CD4-positive, alpha-beta T cell (primary cell): ENCODE measurements at regions of chr16 and their contacts with region 1.

Region 1: DNA sequence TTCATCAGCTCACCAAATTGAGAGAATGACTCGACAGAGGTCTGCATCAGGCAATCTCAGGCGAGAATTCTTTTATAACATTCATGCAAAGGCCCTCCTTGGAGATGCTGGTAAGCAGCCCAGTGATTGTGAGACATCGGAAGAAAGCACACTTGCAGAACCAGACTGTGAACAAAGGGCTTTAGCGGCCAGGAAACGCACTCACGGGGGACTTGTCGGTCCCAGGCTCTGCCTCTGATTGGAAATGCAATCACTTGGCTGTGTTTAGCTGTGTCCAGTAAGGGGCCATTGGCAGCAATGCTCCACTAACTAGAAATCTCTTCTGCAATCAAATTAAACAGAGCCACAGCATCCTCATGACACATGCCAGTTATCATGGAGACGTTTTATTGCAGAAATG is 226.7 kb upstream of the CDH13 start:
- DNase-seq: no peak
- ATAC-seq: no peak
- H3K4me3 ChIP-seq: no peak overlapping the region
- H3K4me3 Mint-ChIP-seq: no peak overlapping the region
- H3K27ac ChIP-seq: no peak overlapping the region
- H3K27ac Mint-ChIP-seq: no peak overlapping the region
- H3K4me1 ChIP-seq: no peaks in the 10 kb centered on the region
- H3K4me1 Mint-ChIP-seq: no peaks in the 10 kb centered on the region
- H3K27me3 ChIP-seq: peaks cover 0 to 3% of the 10 kb centered on the region in 2 experiments
- H3K27me3 Mint-ChIP-seq: peaks cover 23% of the 10 kb centered on the region
- CTCF ChIP-seq: no peak

Region 2: DNA sequence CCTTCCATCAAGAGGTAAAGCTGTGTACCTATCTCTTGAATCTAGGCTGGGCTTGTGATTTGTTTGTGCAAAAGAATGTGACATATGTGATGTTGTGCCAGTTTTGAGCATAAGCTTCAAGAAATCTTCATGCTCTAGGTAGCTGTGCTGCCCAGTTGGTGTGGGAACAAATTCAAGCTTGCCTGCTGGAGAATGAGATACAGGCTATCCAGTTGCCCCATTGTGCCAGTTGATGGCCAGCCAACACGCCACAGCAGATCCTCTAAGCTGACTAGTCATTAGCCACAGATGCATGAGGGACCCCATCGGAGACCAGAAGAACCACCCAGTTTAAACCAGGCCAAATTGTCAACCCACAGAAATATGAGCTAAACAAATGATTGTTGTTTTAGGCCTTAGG is 49.5 kb before region 1 on chr16:
- CTCF ChIA-PET with region 1: no interaction called
- POLR2A ChIA-PET with region 1: no interaction called
- intact Hi-C with region 1: loop called in 1 of 2 experiments (anchors 5 kb)
- DNase-seq: no peak
- ATAC-seq: no peak
- H3K4me3 ChIP-seq: no peak overlapping the region
- H3K4me3 Mint-ChIP-seq: no peak overlapping the region
- H3K27ac ChIP-seq: no peak overlapping the region
- H3K27ac Mint-ChIP-seq: no peak overlapping the region
- H3K4me1 ChIP-seq: no peaks in the 10 kb centered on the region
- H3K4me1 Mint-ChIP-seq: no peaks in the 10 kb centered on the region
- H3K27me3 ChIP-seq: no peaks in the 10 kb centered on the region
- H3K27me3 Mint-ChIP-seq: no peaks in the 10 kb centered on the region
- CTCF ChIP-seq: no peak